Activated CD8-positive, alpha-beta memory T cell treated with anti-CD3 and anti-CD28 coated beads, Interleukin-2, amount 10 ng/mL, durations not matched to agents 7 days and 5 days (primary cell): ENCODE measurements at regions of chr20 and their contacts with region 1.

Region 1: DNA sequence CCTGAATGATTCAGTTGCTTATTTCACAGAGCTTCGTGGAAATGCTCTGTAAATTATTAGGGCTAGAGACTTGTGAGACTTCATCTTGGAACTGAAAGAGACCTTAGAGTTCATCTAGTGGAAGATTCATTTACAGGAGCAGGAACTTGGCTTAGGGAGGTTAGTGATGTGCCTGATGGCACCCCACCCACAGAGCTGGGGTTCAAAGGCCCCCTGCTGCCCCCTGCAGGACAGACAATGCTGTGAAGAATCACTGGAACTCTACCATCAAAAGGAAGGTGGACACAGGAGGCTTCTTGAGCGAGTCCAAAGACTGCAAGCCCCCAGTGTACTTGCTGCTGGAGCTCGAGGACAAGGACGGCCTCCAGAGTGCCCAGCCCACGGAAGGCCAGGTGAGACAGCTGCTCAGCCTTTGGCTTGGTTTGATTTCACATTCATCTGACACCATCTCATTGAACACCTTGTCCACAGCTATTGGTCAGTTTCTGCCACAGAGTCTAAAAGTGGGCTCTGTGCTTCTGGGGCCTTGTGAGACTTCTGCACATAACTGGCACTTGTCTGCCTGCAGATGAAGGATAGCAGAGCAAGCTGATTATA is 25.1 kb downstream of the MYBL2 start:
- DNase-seq: peak; percentile 71
- ATAC-seq: peak; percentile 71
- H3K4me3 Mint-ChIP-seq: no peak overlapping the region
- H3K27ac Mint-ChIP-seq: no peak overlapping the region
- H3K4me1 Mint-ChIP-seq: no peaks in the 10 kb centered on the region
- H3K27me3 Mint-ChIP-seq: no peaks in the 10 kb centered on the region

Region 2: GRCh38 chr20:43448748-43449535 is 243.1 kb before region 1 on chr20:
- CTCF ChIA-PET with region 1: interaction called, 23 read pairs
- DNase-seq: peak; percentile 61
- ATAC-seq: peak; percentile 67
- H3K4me3 Mint-ChIP-seq: no peak overlapping the region
- H3K27ac Mint-ChIP-seq: no peak overlapping the region
- H3K4me1 Mint-ChIP-seq: peaks cover 5% of the 10 kb centered on the region
- H3K27me3 Mint-ChIP-seq: peaks cover 26% of the 10 kb centered on the region

Region 3: DNA sequence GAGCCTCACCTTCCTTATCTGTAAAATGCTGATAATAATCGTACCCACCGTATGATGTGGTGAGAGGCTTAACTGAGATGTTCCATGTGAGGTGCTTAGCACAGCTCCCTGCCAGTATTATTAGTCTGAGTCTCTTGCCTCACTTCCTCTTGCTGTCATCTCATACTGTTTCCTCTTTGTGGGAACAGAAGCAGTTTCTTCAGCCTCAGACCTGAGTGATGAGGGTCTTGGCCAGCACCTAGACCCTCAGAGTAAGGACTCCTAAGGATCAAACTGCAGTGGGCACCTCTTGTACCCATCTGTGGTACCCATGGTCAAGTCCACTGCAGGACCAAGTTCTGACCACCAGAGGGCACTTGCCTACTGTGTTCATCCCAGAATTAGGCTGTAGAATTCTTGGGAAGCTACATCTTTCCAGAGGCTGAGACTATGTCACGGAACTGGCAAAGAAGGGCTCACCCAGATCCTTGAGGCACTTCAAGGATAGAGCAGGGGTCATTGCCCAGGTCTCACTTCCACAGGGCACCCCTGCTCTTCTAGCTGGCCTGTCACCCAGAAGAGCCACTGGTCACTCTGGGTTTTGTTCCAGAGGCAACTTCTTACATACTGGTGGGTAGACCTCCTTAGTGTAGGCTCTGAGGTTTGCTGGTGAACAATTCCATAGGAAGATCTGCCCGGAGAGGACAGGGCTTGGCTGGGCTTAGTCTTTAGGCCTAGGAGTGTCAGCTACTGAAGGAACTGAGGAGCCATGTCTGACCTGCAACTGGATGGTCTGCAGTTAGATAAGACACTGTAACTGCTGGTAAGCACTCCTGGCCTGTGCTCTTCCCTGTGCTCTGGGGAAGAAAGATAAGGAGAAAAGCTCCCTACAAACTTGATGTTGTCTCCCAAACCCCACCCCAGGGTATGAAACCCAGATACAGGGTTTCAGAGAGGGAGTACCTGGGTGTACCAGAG is 153.8 kb before region 1 on chr20:
- CTCF ChIA-PET with region 1: interaction called, 24 read pairs
- DNase-seq: peak; percentile 64
- ATAC-seq: peak; percentile 51
- H3K4me3 Mint-ChIP-seq: no peak overlapping the region
- H3K27ac Mint-ChIP-seq: no peak overlapping the region
- H3K4me1 Mint-ChIP-seq: no peaks in the 10 kb centered on the region
- H3K27me3 Mint-ChIP-seq: no peaks in the 10 kb centered on the region

Region 4: DNA sequence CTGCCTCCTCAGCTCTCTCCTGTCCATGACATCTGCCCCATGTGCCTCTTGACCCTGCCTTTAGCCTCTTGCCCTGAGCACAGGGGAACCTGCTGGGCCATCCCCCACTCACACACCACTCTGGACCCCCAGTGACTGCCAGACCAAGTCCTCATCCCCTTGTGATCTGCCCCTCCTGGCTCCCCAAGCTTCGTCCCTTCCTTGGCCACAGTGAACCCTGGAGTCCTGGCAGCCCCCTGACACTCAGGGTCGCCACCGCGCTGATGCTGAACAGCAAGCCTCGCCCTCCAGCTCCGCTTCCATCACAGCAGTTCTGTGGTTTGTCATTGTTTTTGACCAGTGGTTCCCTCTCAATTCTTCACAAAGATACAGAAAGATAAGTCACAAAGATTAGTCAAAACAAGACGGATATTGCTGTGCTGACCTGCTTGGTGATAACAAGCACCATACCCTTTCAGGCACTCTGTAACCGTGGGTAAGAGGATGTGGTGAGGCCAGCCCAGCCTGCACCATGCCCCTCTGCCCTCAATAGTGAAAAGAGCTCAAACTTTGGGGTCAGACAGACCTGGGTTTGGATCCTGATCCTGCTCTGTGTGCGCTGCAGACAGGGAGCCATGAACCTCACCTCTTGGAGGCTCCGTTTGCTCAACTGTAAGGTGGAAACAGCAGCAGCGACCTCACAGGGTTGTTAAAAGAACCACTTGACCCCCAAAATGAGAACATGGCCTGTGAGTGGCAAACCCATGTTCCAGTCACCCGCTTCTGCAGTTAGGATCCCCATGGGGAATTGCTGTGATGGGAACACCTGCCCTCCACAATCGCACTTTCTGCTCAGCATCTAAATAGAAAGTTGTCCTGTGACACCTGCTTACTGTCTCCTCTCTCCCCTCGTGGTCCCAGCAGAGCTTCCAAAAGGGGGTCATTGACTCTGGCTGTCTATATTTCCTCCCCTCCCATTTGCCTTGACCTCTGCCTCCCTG is 337.1 kb after region 1 on chr20:
- CTCF ChIA-PET with region 1: no interaction called
- DNase-seq: peak; percentile 88
- ATAC-seq: peak; percentile 89
- H3K4me3 Mint-ChIP-seq: peak overlapping the region; percentile 38
- H3K27ac Mint-ChIP-seq: peak overlapping the region; percentile 85
- H3K4me1 Mint-ChIP-seq: peaks cover 58% of the 10 kb centered on the region
- H3K27me3 Mint-ChIP-seq: peaks cover 89% of the 10 kb centered on the region

Region 5: GRCh38 chr20:44598423-44599305 is 906.6 kb after region 1 on chr20:
- CTCF ChIA-PET with region 1: no interaction called
- DNase-seq: no peak
- ATAC-seq: peak; percentile 76
- H3K4me3 Mint-ChIP-seq: peak overlapping the region; percentile 44
- H3K27ac Mint-ChIP-seq: peak overlapping the region; percentile 58
- H3K4me1 Mint-ChIP-seq: peaks cover 11% of the 10 kb centered on the region
- H3K27me3 Mint-ChIP-seq: no peaks in the 10 kb centered on the region